ENCODE measurements at regions of chr19 and their contacts with region 1.

Region 1: DNA sequence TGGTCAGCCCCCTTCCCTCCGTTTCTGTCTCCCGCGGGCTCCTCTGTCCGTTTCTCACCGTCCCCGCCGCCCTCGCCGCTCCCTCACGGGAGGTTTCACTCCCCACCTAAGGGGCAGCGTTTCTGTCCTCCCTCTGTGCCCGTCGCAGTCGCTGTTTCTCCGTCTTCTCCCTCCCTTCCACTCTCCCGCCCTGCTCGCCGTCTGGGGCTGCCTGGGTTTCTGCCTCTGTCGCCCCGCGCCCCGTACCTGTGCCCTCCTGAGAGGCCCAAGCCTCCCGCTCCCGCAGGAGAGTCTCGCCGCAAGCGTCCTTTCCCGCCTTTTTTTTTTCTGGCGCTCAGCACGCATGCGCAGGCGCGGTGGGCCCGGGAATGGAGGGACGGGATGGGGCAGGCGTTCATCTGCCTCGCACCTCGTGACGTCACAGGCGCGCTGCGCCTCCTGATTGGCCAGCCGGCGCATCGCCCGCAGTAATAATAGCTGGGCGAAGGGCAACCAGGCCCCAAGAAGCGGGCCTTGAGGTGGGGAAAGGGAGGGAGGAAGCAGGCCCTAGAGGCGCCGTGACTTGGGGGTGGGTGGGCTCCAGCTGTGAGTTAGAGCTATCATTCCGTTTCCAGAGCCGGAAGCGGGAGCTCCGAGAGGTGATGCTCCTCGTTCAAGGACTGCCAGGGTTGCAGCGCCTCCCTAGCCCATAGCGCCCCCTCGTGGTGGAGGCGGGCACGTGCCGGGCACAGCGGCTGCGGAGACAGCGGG is 15.4 kb downstream of the SSC5D start:
- DNase-seq: peak; percentile 95
- H3K4me3 ChIP-seq: peak overlapping the region in 1 of 3 experiments; percentile 26
- H3K27ac ChIP-seq: no peak overlapping the region
- H3K4me1 ChIP-seq: no peaks in the 10 kb centered on the region
- H3K27me3 ChIP-seq: no peaks in the 10 kb centered on the region
- CTCF ChIP-seq: peak; percentile 96 to 98
- POLR2A ChIP-seq: no peak

Region 2: GRCh38 chr19:55289117-55289796 is 214.4 kb before region 1 on chr19:
- CTCF ChIA-PET with region 1: interaction called, 9 read pairs
- POLR2A ChIA-PET with region 1: no interaction called
- dilution Hi-C with region 1: no loop called
- intact Hi-C with region 1: loop called (anchors 1 kb)
- DNase-seq: no peak
- H3K4me3 ChIP-seq: no peak overlapping the region
- H3K27ac ChIP-seq: no peak overlapping the region
- H3K4me1 ChIP-seq: no peaks in the 10 kb centered on the region
- H3K27me3 ChIP-seq: no peaks in the 10 kb centered on the region
- CTCF ChIP-seq: no peak
- POLR2A ChIP-seq: no peak

Region 3: GRCh38 chr19:55418185-55418584 is 85.5 kb before region 1 on chr19:
- CTCF ChIA-PET with region 1: interaction called, 15 read pairs
- POLR2A ChIA-PET with region 1: no interaction called
- dilution Hi-C with region 1: no loop called
- intact Hi-C with region 1: loop called (anchors 2 kb)
- DNase-seq: peak; percentile 71
- H3K4me3 ChIP-seq: no peak overlapping the region
- H3K27ac ChIP-seq: no peak overlapping the region
- H3K4me1 ChIP-seq: no peaks in the 10 kb centered on the region
- H3K27me3 ChIP-seq: peaks cover 0 to 5% of the 10 kb centered on the region in 2 experiments
- CTCF ChIP-seq: peak; percentile 64 to 71
- POLR2A ChIP-seq: no peak

Region 4: DNA sequence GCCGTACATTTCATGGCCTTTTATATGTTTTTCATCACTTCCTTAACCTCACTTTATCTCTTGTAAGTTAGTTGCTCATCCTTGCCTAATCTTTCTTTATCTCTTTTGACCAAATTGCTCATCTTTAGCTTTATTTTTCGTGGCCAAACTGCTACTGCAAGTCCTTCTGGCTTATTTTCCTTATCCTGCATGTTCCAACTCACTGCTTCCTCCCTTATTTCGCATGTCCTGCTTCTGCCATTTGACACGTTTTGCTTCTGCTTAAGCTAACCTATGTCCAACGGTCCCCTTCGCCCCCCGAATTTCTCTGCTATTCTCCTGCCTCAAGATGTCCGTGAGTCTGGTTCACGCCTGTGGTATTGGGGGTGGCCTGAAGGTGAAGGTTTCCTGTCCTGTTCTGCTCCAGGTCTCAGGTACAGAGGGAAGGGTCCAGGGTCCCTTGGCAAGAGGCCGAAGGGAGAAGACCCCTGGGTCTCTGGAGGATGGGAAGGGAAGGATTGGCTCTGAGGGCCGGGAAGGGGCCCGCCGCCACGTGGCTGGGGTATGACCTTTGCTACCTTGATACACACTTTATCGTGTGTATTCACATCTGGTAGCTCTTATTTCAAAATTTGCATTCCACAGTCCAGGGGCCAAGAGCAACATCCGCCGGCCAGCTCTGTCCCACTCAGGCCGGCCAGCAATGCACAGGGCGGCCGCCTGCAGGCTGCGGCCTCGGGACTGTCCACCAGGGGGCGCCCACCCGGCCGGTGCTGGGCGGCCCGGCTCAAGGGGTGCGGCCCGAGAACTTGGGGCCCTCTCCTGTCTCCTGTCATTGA is 36.2 kb before region 1 on chr19:
- CTCF ChIA-PET with region 1: interaction called, 298 read pairs
- POLR2A ChIA-PET with region 1: interaction called, 7 read pairs
- dilution Hi-C with region 1: no loop called
- intact Hi-C with region 1: loop called (anchors 1 kb)
- DNase-seq: peak; percentile 38
- H3K4me3 ChIP-seq: no peak overlapping the region
- H3K27ac ChIP-seq: no peak overlapping the region
- H3K4me1 ChIP-seq: no peaks in the 10 kb centered on the region
- H3K27me3 ChIP-seq: no peaks in the 10 kb centered on the region
- CTCF ChIP-seq: peak; percentile 97 to 99
- POLR2A ChIP-seq: no peak

Region 5: GRCh38 chr19:55516878-55517620 is 13.4 kb after region 1 on chr19:
- CTCF ChIA-PET with region 1: interaction called, 14 read pairs
- POLR2A ChIA-PET with region 1: no interaction called
- dilution Hi-C with region 1: no loop called
- intact Hi-C with region 1: no loop called
- DNase-seq: peak; percentile 89
- H3K4me3 ChIP-seq: peak overlapping the region in 2 of 3 experiments; percentile 15 to 40
- H3K27ac ChIP-seq: no peak overlapping the region
- H3K4me1 ChIP-seq: no peaks in the 10 kb centered on the region
- H3K27me3 ChIP-seq: no peaks in the 10 kb centered on the region
- CTCF ChIP-seq: peak; percentile 76 to 95
- POLR2A ChIP-seq: peak; percentile 17

Measured in endothelial cell of umbilical vein (primary cell).